IMR-90 (cell line): ENCODE measurements at regions of chr7 and their contacts with region 1.

Region 1: GRCh38 chr7:82810558-82811259 is 352.0 kb downstream of the PCLO start:
- DNase-seq: peak; percentile 83
- ATAC-seq: peak; percentile 98
- H3K4me3 ChIP-seq: no peak overlapping the region
- H3K27ac ChIP-seq: no peak overlapping the region
- H3K4me1 ChIP-seq: no peaks in the 10 kb centered on the region
- H3K27me3 ChIP-seq: no peaks in the 10 kb centered on the region
- CTCF ChIP-seq: peak; percentile 75
- POLR2A ChIP-seq: no peak
- RAD21 ChIP-seq: peak; percentile 51; the same call in 1 of the 2 replicates

Region 2: DNA sequence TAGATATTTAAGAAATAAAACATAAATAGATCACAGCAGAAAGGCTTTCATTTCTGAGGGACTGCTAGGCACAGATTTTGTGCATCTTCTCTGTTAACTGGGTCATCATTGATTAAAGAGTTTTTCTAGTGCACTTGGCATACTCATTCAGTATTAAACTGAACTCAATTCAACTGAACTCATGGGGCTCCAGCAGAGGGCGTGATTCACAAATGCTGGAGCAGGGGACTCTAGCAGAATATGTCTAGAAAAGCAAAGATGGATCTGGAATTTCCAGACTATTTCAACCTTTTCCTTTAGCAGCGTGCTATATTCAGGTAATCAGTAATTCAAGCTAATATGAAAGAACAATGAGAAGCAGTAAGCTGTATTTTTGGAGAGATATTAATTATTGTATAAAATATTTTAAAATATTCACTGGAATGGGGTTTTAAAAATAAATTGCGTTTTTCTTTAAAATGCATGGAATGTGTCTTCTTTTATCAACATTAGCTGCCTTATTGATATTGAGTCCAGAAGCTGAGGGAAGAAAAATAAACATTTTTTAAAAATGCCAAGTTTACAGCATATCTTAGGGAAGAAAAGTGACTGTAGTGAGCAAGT is 70.4 kb before region 1 on chr7:
- CTCF ChIA-PET with region 1: no interaction called
- POLR2A ChIA-PET with region 1: no interaction called
- dilution Hi-C with region 1: no loop called
- in situ Hi-C with region 1: no loop called
- intact Hi-C with region 1: loop called (anchors 1 kb)
- DNase-seq: peak; percentile 72
- ATAC-seq: peak; percentile 83
- H3K4me3 ChIP-seq: no peak overlapping the region
- H3K27ac ChIP-seq: no peak overlapping the region
- H3K4me1 ChIP-seq: peaks cover 4% of the 10 kb centered on the region; the same call in 1 of the 2 replicates
- H3K27me3 ChIP-seq: no peaks in the 10 kb centered on the region; the same call in 1 of the 2 replicates
- CTCF ChIP-seq: peak; percentile 78
- POLR2A ChIP-seq: no peak
- RAD21 ChIP-seq: peak; percentile 70

Region 3: DNA sequence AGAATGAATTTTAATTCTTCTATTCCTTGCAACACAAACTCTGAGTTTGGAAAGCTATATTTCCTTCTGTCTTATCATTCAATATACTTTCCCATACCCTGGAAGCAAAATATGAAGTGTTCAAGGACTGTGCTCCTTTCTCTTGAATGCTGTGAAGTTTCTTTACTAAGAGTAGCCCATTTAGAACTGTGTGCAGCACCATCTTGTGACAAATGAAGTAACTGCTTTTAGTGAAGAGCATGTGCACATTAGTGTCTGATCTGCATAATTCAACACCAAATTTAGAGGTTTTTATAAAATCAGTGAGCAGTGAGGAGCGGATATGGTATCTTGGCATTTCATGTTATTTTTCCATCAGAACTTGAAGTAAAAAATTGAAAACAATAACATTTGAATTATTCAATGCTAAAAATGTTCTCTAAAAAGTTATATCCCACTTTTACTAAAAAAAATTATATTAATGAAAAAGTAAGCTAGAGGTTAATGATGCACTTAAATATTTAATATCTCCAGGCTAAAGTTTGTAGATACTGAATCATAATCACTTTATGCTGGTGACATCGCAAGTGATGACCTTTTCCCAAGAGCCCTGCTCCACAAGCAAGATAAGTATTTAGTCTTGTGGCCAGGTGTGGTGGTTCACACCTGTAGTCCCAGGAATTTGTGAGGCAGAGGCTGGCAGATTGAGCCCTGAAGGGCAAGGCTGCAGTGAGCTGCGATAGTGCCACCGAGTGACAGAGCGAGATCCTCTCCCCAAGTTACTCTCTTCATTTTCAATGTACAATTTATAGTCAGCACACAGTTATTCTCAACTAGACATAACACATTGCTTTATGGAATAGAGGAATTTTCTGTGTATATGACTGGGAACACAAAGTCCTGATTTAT is 460.7 kb after region 1 on chr7:
- CTCF ChIA-PET with region 1: no interaction called
- POLR2A ChIA-PET with region 1: no interaction called
- dilution Hi-C with region 1: no loop called
- in situ Hi-C with region 1: no loop called
- intact Hi-C with region 1: loop called (anchors 5 kb)
- DNase-seq: peak; percentile 19
- ATAC-seq: peak; percentile 74
- H3K4me3 ChIP-seq: no peak overlapping the region
- H3K27ac ChIP-seq: no peak overlapping the region
- H3K4me1 ChIP-seq: no peaks in the 10 kb centered on the region
- H3K27me3 ChIP-seq: no peaks in the 10 kb centered on the region
- CTCF ChIP-seq: peak; percentile 27
- POLR2A ChIP-seq: no peak
- RAD21 ChIP-seq: peak; percentile 31; the same call in 1 of the 2 replicates

Region 4: GRCh38 chr7:83365746-83366145 is 555.0 kb after region 1 on chr7:
- CTCF ChIA-PET with region 1: no interaction called
- POLR2A ChIA-PET with region 1: no interaction called
- dilution Hi-C with region 1: no loop called
- in situ Hi-C with region 1: no loop called
- intact Hi-C with region 1: loop called (anchors 10 kb)
- DNase-seq: no peak
- ATAC-seq: no peak
- H3K4me3 ChIP-seq: no peak overlapping the region
- H3K27ac ChIP-seq: no peak overlapping the region
- H3K4me1 ChIP-seq: no peaks in the 10 kb centered on the region
- H3K27me3 ChIP-seq: no peaks in the 10 kb centered on the region
- CTCF ChIP-seq: peak; percentile 20; the same call in 1 of the 2 replicates
- POLR2A ChIP-seq: no peak
- RAD21 ChIP-seq: no peak